ENCODE measurements at regions of chr2 and their contacts with region 1.

Region 1: GRCh38 chr2:173402405-173402974 is 47.8 kb downstream of the CDCA7 start:
- DNase-seq: peak; percentile 79 to 86 (median 81)
- ATAC-seq: peak; percentile 90 to 98 (median 96)
- H3K4me3 ChIP-seq: peak overlapping the region in 9 of 12 donors; percentile 21 to 41 (median 31)
- H3K27ac ChIP-seq: no peak overlapping the region
- H3K4me1 ChIP-seq: peaks cover 0 to 13% (median 0%) of the 10 kb centered on the region in 12 donors
- H3K27me3 ChIP-seq: peaks cover 0 to 57% (median 8%) of the 10 kb centered on the region in 9 donors
- CTCF ChIP-seq: peak; percentile 64 to 88 (median 83)
- POLR2A ChIP-seq: no peak

Region 2: DNA sequence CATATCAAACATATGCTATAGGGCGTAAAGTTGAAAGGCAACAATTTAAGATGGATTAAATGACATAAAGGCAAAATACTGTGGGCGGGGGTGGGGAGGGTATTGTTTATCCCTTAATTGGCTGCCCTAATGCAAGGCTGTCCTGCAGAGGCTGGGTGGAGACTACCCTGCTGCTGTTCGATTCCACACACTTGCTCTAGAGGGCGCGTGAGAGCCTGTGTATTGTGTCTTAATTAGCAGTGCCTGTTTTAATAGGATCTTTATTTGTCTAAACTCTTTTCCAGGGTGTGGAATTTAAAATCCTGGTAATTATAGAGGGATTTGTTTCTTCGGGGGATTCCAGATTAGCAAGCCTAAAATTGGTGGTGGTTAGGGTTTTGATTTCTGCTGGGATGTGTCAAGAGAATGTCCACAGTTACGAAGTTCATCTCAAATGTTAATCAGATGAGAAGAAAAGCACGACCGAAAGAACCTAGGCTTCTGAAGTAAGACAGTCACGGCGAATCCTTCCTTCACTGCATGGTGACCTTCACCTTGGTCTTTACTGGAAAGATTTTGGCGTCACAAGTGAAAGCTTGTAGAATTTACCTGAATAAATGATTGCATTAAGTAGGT is 430.4 kb before region 1 on chr2:
- intact Hi-C with region 1: loop called in 1 of 10 experiments (anchors 5 kb)
- DNase-seq: peak in 3 of 5 donors; percentile 30 to 49 (median 42)
- ATAC-seq: peak in 2 of 4 donors; percentile 35 to 56
- H3K4me3 ChIP-seq: no peak overlapping the region
- H3K27ac ChIP-seq: no peak overlapping the region
- H3K4me1 ChIP-seq: peaks cover 0 to 43% (median 23%) of the 10 kb centered on the region in 12 donors
- H3K27me3 ChIP-seq: no peaks in the 10 kb centered on the region
- CTCF ChIP-seq: peak; percentile 56 to 88 (median 74)
- POLR2A ChIP-seq: no peak

Region 3: GRCh38 chr2:173448938-173449471 is 46.5 kb after region 1 on chr2:
- intact Hi-C with region 1: loop called (anchors 1 to 5 kb)
- DNase-seq: peak; percentile 83 to 90 (median 88)
- ATAC-seq: peak; percentile 68 to 96 (median 94)
- H3K4me3 ChIP-seq: peak overlapping the region in 10 of 12 donors; percentile 22 to 53 (median 40)
- H3K27ac ChIP-seq: peak overlapping the region in 11 of 12 donors; percentile 33 to 80 (median 62)
- H3K4me1 ChIP-seq: peaks cover 0 to 9% (median 0%) of the 10 kb centered on the region in 12 donors
- H3K27me3 ChIP-seq: no peaks in the 10 kb centered on the region
- CTCF ChIP-seq: peak; percentile 66 to 88 (median 74)
- POLR2A ChIP-seq: no peak

Region 4: GRCh38 chr2:173614265-173614930 is 211.9 kb after region 1 on chr2:
- intact Hi-C with region 1: no loop called
- DNase-seq: no peak
- ATAC-seq: no peak
- H3K4me3 ChIP-seq: no peak overlapping the region
- H3K27ac ChIP-seq: no peak overlapping the region
- H3K4me1 ChIP-seq: no peaks in the 10 kb centered on the region
- H3K27me3 ChIP-seq: peaks cover 0 to 11% (median 0%) of the 10 kb centered on the region in 9 donors
- CTCF ChIP-seq: no peak
- POLR2A ChIP-seq: no peak

Region 5: GRCh38 chr2:173749315-173749714 is 346.8 kb after region 1 on chr2:
- intact Hi-C with region 1: loop called in 4 of 10 experiments (anchors 5 to 10 kb)
- DNase-seq: no peak
- ATAC-seq: no peak
- H3K4me3 ChIP-seq: no peak overlapping the region
- H3K27ac ChIP-seq: no peak overlapping the region
- H3K4me1 ChIP-seq: peaks cover 0 to 10% (median 1%) of the 10 kb centered on the region in 12 donors
- H3K27me3 ChIP-seq: peaks cover 0 to 7% (median 0%) of the 10 kb centered on the region in 9 donors
- CTCF ChIP-seq: peak in 5 of 12 donors; percentile 20 to 29 (median 24)
- POLR2A ChIP-seq: no peak

Region 6: DNA sequence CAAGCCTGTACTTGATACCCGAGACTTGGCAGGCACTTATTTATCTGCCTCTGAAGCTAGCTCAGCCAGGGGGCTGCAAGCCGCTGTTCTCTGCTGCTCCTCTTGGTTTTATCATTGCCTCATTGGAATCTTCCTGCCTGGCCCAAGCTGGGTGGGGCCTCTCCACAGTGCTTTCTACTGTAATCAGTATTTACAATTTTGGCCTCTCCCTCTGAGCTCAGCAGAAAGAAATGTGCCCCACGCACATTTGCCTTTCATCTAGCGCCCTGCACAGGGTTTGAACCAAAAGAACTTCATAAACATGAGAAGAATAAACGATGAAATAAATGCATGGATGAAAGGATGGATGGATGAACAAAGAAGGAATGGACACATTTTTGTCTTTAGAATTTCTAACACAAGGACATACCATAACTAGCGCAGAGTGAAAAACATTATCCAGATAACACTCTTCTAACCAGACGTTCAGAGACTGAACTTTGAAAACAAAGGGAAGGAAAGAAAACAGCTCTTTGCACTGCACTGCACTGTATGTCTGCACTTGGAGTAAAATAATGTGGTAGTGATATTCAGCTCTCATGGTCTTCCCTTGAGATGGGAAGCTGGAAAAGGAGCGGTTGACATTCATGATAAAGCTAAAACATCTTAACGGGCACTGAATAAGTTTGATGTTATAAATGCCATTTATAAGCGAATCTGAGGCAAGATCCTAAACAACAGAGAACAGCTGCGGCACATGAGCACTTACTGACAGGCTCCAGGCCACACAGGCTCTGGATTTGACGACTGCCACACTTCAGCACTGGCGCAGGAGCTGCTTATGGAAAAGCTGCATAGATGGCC is 649.5 kb after region 1 on chr2:
- intact Hi-C with region 1: loop called in 5 of 10 experiments (anchors 10 kb)
- DNase-seq: peak in 2 of 5 donors; percentile 31 to 45
- ATAC-seq: peak; percentile 65 to 89 (median 82)
- H3K4me3 ChIP-seq: peak overlapping the region in 1 of 12 donors; percentile 24
- H3K27ac ChIP-seq: peak overlapping the region in 6 of 12 donors; percentile 18 to 49 (median 40)
- H3K4me1 ChIP-seq: peaks cover 0 to 30% (median 16%) of the 10 kb centered on the region in 12 donors
- H3K27me3 ChIP-seq: no peaks in the 10 kb centered on the region
- CTCF ChIP-seq: no peak
- POLR2A ChIP-seq: no peak

Measured in heart left ventricle (tissue), 16 donors.